RWPE1 (cell line): ENCODE measurements at regions of chr14 and their contacts with region 1.

Region 1: DNA sequence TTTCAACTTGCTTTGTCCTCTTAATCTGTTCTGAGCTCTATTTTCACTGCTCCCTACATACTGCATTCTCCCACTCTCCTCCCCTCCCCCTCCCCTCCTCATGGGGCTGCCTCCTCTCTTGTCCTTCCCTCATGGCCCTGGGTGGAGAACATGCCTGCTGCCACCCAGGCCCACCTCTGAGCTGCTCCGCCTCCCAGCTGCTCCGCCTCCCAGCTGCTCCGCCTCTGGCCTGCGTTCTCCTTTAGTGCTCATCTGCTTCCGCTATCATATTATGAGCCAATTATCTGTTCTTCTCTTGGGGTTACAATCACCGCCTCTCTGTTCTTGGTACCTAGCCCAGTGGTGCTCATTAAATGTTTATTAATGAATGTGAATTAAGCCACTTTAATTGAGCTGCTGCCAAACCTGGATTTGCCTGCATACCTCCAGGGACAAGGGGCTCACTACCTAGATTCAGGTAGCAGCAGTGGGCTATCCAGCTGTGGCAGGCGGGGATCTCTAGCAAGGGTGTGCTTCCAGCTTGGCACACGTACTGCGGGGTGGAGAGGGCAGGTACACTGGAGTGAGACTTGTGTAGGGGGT is 32.0 kb upstream of the FAM181A start:
- DNase-seq: no peak
- H3K27ac ChIP-seq: no peak overlapping the region
- CTCF ChIP-seq: no peak

Region 2: GRCh38 chr14:93655078-93655750 is 239.9 kb before region 1 on chr14:
- CTCF ChIA-PET with region 1: interaction called, 10 read pairs
- POLR2A ChIA-PET with region 1: no interaction called
- DNase-seq: peak; percentile 44
- H3K27ac ChIP-seq: no peak overlapping the region
- CTCF ChIP-seq: peak; percentile 28